ENCODE measurements at regions of chr4 and their contacts with region 1.

Region 1: DNA sequence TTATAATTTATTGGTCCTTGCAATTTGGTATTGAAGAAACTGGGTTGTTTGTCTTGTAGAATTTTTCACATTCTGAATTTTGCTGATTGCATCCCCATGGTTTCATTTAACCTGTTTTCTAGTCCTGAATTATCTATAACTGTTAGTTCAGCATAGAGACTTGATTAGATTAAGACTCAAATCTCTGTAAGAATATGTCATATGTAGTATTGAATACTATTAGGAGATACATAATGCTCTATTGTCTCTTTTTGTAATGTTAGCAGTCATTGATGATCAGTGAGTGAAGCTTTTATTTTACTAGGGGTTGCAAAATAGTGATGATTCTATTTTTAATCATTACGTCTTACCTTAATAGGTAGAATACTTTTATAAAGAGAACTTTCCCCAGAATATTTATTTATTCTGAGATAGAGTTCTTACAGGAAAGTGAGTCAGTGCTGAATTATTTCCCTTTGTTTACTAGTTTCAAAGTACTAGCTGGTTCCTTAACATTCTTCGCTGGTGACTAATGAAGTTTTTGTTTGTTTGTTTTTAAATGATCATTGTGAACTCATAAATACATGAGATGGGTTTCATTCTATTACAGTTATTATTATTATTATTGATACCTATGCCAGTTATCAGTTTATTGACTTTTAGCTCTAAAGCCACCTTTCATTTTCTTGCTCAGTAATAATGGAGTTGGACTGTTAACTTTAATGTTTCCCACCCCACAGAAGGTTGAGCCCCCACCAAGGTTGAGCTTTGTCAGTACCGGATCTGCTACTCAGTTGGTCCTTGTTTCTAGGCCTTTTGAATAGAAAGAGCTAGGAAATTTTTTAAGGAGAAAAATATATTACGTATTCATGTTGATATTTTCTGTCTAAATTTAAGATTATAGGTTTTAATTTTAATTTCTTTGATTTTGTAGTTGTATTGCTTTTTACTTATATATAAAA is 102.3 kb downstream of the LARP1B start:
- DNase-seq: peak; percentile 92
- ATAC-seq: peak; percentile 56
- H3K4me3 ChIP-seq: peak overlapping the region; percentile 15; the same call in 1 of the 2 replicates
- H3K27ac ChIP-seq: peak overlapping the region; percentile 75
- H3K4me1 ChIP-seq: peaks cover 35% of the 10 kb centered on the region
- H3K27me3 ChIP-seq: no peaks in the 10 kb centered on the region
- CTCF ChIP-seq: no peak

Region 2: DNA sequence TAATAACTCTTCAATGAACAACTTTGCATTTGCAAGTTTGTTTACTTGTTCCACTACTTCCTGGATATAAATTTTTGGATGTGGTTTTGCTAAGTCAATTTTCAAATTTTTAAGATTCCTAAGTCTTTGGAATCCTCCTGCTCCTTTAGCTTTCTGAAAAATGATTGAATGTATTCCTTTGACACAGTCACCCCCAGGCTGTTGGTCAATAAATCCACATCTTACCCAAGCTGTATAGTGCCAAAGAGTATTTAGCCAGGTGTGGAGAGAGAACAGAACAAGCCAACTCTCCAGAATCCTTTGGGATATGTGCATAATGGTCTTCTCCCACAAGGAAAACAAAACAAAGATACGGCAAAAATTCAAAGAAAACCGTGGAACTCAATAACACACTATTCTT is 587.6 kb before region 1 on chr4:
- CTCF ChIA-PET with region 1: no interaction called
- POLR2A ChIA-PET with region 1: no interaction called
- intact Hi-C with region 1: no loop called
- DNase-seq: peak; percentile 32
- ATAC-seq: peak; percentile 64
- H3K4me3 ChIP-seq: no peak overlapping the region
- H3K27ac ChIP-seq: no peak overlapping the region
- H3K4me1 ChIP-seq: peaks cover 7% of the 10 kb centered on the region; the same call in 1 of the 2 replicates
- H3K27me3 ChIP-seq: no peaks in the 10 kb centered on the region
- CTCF ChIP-seq: no peak

Region 3: DNA sequence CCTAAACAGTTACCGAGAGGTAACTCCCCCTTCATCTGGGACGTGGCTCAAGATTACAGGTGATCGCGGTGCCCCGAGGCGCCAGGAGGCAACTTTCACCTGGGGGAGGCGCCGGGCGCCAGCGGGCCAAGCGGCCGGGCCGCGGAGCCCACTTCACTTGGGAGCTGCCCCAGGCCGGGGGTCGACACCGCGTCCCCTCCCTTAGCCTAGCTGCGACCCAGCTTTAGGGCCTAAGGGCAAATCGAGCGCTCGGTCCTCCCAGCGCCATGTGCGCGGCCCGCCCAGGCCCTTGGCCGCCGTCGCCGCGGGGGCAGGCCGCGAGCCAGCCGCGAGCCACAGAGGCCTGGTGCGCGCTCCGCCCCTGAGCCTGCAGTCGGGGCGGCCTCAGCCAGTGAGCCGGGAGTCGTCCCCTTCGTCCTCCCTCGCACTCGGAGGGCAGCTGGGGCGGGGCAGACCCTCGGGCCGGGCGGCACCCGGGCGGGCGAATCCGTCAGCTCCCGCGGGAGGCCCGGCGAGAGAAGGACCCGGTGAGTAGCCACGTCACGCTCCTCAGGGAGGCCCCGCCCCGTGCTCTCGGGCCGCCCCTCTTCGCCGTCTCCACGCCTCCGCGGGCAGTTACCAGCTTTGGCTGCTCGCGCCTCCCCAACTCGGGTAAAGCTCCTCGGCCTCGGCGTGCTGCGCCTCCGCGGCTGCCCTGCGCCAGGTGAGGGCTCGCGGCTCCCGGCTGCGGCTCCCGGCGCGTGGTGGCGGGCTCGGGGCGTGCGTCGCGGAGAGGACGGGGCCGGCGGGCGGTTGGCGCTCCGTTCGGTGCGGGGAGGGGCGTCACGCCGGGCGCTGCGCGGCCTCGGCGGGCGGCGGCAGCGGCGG is 102.5 kb before region 1 on chr4 and contains the start of gene LARP1B:
- CTCF ChIA-PET with region 1: no interaction called
- POLR2A ChIA-PET with region 1: no interaction called
- intact Hi-C with region 1: loop called (anchors 5 kb)
- DNase-seq: peak; percentile 90
- ATAC-seq: peak; percentile 83
- H3K4me3 ChIP-seq: peak within 1 kb of the TSS; percentile 92
- H3K27ac ChIP-seq: peak within 1 kb of the TSS; percentile 86
- H3K4me1 ChIP-seq: peaks cover 9% of the 10 kb centered on the region; the same call in 1 of the 2 replicates
- H3K27me3 ChIP-seq: no peaks in the 10 kb centered on the region
- CTCF ChIP-seq: no peak
- total RNA-seq, gene LARP1B: 14.8 and 22.2 TPM in 2 replicates